ENCODE measurements at regions of chr1 and their contacts with region 1.

Region 1: GRCh38 chr1:117367047-117368018 is at the start of gene MAN1A2:
- DNase-seq: peak; percentile 82
- H3K4me3 ChIP-seq: peak within 1 kb of the TSS; percentile 59 to 94 (median 91)
- H3K27ac ChIP-seq: peak within 1 kb of the TSS; percentile 72
- H3K4me1 ChIP-seq: peaks cover 20% of the 10 kb centered on the region
- H3K27me3 ChIP-seq: no peaks in the 10 kb centered on the region
- CTCF ChIP-seq: peak in 1 of 2 donors; percentile 0
- total RNA-seq, gene MAN1A2: 23.8 to 41.5 TPM

Region 2: DNA sequence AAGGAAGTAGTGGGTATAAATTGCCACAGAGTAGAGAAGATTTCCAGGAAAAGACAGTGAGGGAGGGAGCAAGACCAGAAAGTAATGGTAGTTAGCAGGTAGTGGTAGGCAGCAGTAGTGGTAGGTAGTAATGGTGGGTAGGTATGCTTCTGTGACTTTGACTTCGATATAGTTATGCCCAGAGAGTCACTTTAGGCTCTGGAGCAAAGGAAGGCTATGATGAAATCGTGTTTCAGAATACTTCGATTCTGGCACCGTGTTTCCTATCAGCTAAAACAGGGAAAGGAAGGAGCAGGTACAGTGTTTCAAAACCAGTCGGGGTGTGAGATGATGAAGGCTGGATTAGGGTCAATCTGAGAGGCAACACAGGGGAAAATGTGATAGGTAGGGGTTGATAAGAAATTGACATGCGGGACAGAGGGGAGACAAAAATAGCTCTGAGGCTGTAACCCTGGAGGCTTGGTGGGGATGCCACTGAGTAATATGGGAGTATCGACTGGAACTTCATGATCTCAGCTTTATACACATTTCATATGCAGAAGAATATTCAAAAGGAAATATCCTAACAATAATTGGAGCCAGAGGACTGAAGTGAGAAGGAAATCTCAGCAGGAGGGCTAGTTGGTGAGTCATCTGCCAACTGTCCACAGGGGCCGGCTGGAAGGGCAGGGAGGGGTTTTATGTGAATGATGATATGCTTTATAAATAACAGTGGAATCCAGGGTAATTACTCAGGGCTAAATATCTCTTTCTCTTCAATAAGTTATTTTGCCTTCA is 220.6 kb before region 1 on chr1:
- CTCF ChIA-PET with region 1: no interaction called
- dilution Hi-C with region 1: no loop called
- in situ Hi-C with region 1: no loop called
- intact Hi-C with region 1: loop called (anchors 10 kb)
- DNase-seq: peak; percentile 73
- H3K4me3 ChIP-seq: no peak overlapping the region
- H3K27ac ChIP-seq: no peak overlapping the region
- H3K4me1 ChIP-seq: peaks cover 13% of the 10 kb centered on the region
- H3K27me3 ChIP-seq: no peaks in the 10 kb centered on the region
- CTCF ChIP-seq: no peak

Region 3: GRCh38 chr1:117295001-117295400 is 72.3 kb before region 1 on chr1:
- CTCF ChIA-PET with region 1: no interaction called
- dilution Hi-C with region 1: no loop called
- in situ Hi-C with region 1: no loop called
- intact Hi-C with region 1: loop called (anchors 5 kb)
- DNase-seq: no peak
- H3K4me3 ChIP-seq: no peak overlapping the region
- H3K27ac ChIP-seq: no peak overlapping the region
- H3K4me1 ChIP-seq: no peaks in the 10 kb centered on the region
- H3K27me3 ChIP-seq: peaks cover 4% of the 10 kb centered on the region
- CTCF ChIP-seq: no peak

Region 4: DNA sequence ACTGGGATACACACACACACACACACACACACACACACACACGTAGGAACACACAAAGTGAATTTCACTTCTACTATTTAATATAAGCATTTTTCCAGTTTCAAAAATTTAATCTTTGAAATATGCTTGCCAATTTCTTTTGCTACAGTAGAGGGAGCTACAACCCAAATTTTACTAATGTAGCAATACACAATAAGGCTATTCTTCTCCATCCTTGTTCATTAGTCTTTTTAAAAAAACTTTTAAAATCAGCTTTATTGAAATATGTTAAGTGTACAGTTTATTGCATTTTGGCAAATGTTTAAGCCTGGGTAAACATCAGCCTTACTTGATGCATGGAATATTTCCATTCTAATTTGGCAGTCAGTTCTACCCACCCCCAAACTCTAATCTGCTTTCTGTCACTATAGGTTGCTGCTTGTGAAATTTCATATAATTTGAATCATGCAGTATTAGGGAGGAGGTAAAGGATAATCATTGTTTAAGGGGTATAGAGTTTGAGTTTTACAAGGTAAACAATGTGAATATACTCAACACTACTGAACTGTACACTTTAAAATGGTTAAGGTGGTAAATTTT is 145.5 kb after region 1 on chr1:
- CTCF ChIA-PET with region 1: no interaction called
- dilution Hi-C with region 1: no loop called
- in situ Hi-C with region 1: no loop called
- intact Hi-C with region 1: loop called (anchors 5 kb)
- DNase-seq: peak; percentile 6
- H3K4me3 ChIP-seq: no peak overlapping the region
- H3K27ac ChIP-seq: no peak overlapping the region
- H3K4me1 ChIP-seq: no peaks in the 10 kb centered on the region
- H3K27me3 ChIP-seq: no peaks in the 10 kb centered on the region
- CTCF ChIP-seq: peak; percentile 46 to 63

Region 5: GRCh38 chr1:117644696-117645311 is 277.5 kb after region 1 on chr1:
- CTCF ChIA-PET with region 1: no interaction called
- dilution Hi-C with region 1: no loop called
- in situ Hi-C with region 1: no loop called
- intact Hi-C with region 1: no loop called
- DNase-seq: no peak
- H3K4me3 ChIP-seq: no peak overlapping the region
- H3K27ac ChIP-seq: no peak overlapping the region
- H3K4me1 ChIP-seq: no peaks in the 10 kb centered on the region
- H3K27me3 ChIP-seq: peaks cover 2% of the 10 kb centered on the region
- CTCF ChIP-seq: no peak

Measured in mammary epithelial cell (primary cell).